Sigmoid colon (tissue), 7 donors: ENCODE measurements at regions of chr2 and their contacts with region 1.

Region 1: DNA sequence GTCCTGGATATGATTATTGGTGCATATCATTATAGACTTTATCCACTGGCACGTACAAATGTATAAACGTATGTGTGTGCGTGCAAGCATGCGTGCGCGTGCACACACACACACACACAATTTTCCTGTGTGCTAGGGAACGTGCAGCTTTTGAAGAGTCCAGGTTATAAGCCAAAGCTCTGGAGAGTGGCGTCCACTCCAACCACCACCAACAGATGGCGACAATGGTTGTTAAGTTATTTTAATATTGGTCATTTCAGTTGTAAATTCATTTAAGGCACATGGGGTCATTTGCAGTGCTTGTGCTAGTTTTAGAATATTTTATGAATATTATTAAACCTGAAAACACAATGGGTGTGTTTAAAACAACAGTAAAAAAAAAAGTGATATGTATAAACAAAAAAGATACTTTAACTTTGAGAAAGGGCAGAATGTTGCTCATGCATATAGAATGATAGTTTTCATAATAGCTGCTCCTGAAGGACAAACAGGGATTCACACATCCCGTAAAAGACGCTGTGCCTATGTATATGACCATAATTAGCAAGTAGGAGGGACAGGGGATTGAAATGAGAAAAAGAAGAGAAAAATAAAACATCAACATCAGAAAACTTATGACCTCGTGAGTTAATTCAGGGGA is 124.2 kb upstream of the ITGB6 start:
- DNase-seq: peak; percentile 77
- H3K4me3 ChIP-seq: no peak overlapping the region
- H3K27ac ChIP-seq: peak overlapping the region in 2 of 4 donors; percentile 51 to 57
- H3K4me1 ChIP-seq: peaks cover 0 to 71% (median 62%) of the 10 kb centered on the region in 4 donors
- H3K27me3 ChIP-seq: no peaks in the 10 kb centered on the region
- CTCF ChIP-seq: peak; percentile 51 to 70 (median 64)
- EP300 ChIP-seq: no peak
- POLR2A ChIP-seq: no peak

Region 2: DNA sequence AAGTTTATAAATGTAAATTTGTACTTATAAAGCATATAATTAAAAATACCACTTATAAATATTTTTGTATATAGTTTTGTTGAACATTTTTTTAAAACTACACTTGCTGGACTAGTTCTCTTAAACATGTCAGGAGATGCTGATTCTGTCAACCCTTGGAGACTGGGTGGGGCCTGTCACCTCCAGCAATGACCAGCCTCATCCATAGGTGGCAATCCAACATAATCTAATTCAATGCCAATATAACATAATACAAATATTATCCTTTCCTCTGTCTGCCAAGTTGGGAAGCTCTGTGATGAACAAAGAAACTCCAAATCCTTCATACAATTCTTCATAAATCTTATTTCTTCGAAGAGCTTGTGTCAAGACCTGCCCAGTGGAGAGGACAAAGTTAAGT is 28.9 kb after region 1 on chr2:
- intact Hi-C with region 1: no loop called
- DNase-seq: no peak
- H3K4me3 ChIP-seq: no peak overlapping the region
- H3K27ac ChIP-seq: peak overlapping the region in 3 of 4 donors; percentile 55 to 77 (median 76)
- H3K4me1 ChIP-seq: peaks cover 0 to 91% (median 84%) of the 10 kb centered on the region in 4 donors
- H3K27me3 ChIP-seq: no peaks in the 10 kb centered on the region
- CTCF ChIP-seq: no peak
- EP300 ChIP-seq: no peak
- POLR2A ChIP-seq: no peak

Region 3: GRCh38 chr2:160406591-160407392 is 82.5 kb after region 1 on chr2:
- intact Hi-C with region 1: loop called (anchors 2 kb)
- DNase-seq: peak; percentile 80
- H3K4me3 ChIP-seq: peak overlapping the region; percentile 76 to 100 (median 96)
- H3K27ac ChIP-seq: peak overlapping the region; percentile 95 to 99 (median 98)
- H3K4me1 ChIP-seq: peaks cover 0 to 74% (median 63%) of the 10 kb centered on the region in 4 donors
- H3K27me3 ChIP-seq: no peaks in the 10 kb centered on the region
- CTCF ChIP-seq: no peak
- EP300 ChIP-seq: no peak
- POLR2A ChIP-seq: peak; percentile 26 to 46